ENCODE measurements at regions of chr21 and their contacts with region 1.

Region 1: DNA sequence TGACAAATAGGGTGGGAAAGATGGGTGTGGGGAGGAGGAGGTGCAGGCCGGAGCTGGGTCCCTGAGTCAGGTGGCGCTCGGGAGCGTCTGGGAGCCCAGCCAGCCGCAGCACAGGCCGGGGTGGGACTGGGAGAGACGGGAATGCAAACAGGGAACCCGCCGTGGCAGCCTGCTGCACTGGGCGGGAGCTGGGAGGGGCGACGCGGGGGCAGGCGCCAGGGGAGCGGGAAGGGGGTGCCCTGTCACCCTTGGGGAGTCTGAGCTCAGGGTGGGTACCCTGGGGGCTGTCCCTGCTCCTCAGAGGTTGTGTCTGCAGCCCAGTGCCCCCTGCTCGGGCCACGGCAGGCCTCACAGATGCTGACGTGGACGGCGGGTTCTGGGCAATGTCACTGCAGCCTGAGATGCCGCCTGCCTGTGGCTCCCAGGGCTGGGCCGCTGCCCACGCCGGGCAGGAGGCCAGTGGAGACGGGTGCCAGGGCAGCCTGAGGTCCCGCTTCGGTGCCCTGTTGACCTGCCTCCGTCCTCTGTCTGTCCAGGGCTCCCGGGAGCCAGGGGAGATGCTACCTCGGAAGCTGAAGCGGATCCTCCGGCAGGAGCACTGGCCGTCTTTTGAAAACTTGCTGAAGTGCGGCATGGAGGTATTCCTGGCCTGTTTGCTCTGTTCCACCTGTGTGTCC is 16.6 kb upstream of the LRRC3 start:
- DNase-seq: no peak
- ATAC-seq: peak; percentile 80
- H3K4me3 ChIP-seq: peak overlapping the region; percentile 43 to 73 (median 43); a peak in 4 of 6 replicates
- H3K27ac ChIP-seq: no peak overlapping the region
- H3K4me1 ChIP-seq: peaks cover 40% of the 10 kb centered on the region
- H3K27me3 ChIP-seq: peaks cover 2 to 24% of the 10 kb centered on the region in 2 experiments; a peak in 4 of 5 replicates
- CTCF ChIP-seq: peak; percentile 42
- EP300 ChIP-seq: no peak
- POLR2A ChIP-seq: no peak
- RAD21 ChIP-seq: no peak

Region 2: DNA sequence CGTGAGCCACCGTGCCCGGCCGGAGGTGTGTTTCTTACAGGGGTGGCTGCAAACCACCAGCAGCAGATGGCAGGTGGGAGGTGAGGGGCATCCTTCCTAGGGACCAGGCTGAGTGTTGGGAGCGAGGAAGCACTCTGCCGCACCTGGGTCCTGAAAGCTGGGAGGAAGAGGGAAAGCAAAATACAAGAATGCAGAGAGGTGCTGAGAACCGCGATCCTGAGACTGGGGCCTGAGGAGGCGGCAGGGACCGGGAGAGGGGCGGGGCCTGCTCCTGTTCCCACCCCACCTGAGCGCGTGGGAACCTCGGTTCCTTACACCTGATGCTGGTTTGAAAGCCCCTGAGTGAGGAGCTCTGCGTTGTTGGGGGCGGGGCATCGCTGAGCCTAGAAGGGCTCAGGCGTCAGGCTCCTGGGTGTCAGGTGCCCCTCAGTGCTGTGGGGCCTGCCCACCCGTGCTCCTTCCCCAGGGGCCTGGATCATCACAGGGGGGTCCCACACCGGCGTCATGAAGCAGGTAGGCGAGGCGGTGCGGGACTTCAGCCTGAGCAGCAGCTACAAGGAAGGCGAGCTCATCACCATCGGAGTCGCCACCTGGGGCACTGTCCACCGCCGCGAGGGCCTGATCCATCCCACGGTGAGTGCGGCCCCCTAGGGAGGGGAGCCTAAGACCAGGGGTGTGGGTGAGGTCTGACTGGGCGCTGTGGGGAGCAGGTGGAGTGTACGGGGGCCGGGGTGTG is 69.8 kb before region 1 on chr21:
- CTCF ChIA-PET with region 1: no interaction called
- POLR2A ChIA-PET with region 1: no interaction called
- in situ Hi-C with region 1: no loop called
- intact Hi-C with region 1: loop called (anchors 10 kb)
- DNase-seq: no peak
- ATAC-seq: peak; percentile 62
- H3K4me3 ChIP-seq: no peak overlapping the region; a peak in 1 of 6 replicates
- H3K27ac ChIP-seq: no peak overlapping the region
- H3K4me1 ChIP-seq: peaks cover 18% of the 10 kb centered on the region
- H3K27me3 ChIP-seq: peaks cover 0 to 30% of the 10 kb centered on the region in 2 experiments; a peak in 4 of 5 replicates
- CTCF ChIP-seq: peak; percentile 53
- EP300 ChIP-seq: no peak
- POLR2A ChIP-seq: no peak
- RAD21 ChIP-seq: no peak